ENCODE measurements at regions of chr2 and their contacts with region 1.

Region 1: DNA sequence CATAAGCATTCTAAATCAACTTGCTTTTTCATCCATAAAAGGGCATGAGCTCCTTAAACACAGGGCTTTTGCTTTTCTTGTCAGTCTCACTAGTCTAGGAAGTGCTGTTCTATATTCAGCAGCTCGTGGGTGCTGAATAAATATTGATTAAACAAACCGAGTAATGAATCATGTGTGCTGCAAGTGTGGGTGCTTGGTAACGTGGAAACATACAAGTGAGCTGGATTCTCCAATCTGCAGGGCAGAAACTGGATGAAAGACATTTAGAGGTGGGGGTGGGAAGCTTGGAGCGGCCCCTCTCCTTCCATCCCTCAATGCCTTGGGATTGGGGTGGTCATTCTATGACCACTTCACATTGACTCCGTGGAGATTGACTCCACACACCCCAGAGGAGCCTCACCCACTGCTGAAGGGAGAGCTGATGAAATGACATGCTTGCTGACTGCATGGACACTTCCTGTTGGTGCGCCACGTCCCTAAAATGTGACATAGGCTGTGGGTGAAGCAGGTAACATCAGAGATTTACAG is 114.6 kb downstream of the DOCK10 start:
- DNase-seq: peak; percentile 65
- ATAC-seq: peak; percentile 75
- H3K4me3 Mint-ChIP-seq: peak overlapping the region; percentile 68
- H3K27ac Mint-ChIP-seq: peak overlapping the region; percentile 91
- H3K4me1 Mint-ChIP-seq: peaks cover 91% of the 10 kb centered on the region
- H3K27me3 Mint-ChIP-seq: no peaks in the 10 kb centered on the region

Region 2: GRCh38 chr2:224875841-224876240 is 51.9 kb before region 1 on chr2:
- POLR2A ChIA-PET with region 1: no interaction called
- DNase-seq: no peak
- ATAC-seq: no peak
- H3K4me3 Mint-ChIP-seq: no peak overlapping the region
- H3K27ac Mint-ChIP-seq: no peak overlapping the region
- H3K4me1 Mint-ChIP-seq: peaks cover 14% of the 10 kb centered on the region
- H3K27me3 Mint-ChIP-seq: no peaks in the 10 kb centered on the region

Region 3: DNA sequence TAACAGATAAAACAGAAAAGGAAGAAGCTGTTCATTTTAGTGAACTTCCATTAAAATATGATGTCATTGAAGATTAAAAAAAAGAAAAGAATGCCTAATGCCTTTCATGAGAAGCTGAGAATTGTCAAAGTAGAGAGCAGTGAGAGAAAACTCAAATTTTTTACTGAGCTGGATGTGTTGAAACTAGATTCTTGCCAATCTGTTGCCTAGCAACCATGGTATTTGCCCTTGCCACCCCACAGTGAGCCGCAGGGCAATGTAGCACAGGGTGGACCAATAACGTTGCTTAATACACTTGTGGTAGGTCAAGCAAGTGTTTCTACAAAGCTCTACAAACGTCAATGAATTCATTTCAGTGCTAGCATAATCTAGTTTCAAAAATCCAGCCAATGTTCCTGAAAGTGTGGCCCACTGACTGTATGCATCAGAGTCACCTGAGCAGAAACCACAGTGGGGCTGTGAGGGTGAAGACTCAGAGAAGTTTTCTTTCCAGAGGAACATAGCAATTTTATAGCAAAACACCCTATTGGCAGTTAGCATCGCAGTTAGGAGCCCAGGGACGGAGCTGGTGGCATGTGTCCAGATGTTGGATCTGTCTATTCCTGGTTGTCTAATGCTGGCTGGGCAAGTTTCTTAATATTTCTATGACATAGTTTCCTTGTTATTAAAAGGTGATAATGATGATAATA is 17.7 kb before region 1 on chr2:
- POLR2A ChIA-PET with region 1: no interaction called
- DNase-seq: no peak
- ATAC-seq: peak; percentile 58
- H3K4me3 Mint-ChIP-seq: peak overlapping the region; percentile 29
- H3K27ac Mint-ChIP-seq: peak overlapping the region; percentile 61
- H3K4me1 Mint-ChIP-seq: peaks cover 42% of the 10 kb centered on the region
- H3K27me3 Mint-ChIP-seq: no peaks in the 10 kb centered on the region

Region 4: DNA sequence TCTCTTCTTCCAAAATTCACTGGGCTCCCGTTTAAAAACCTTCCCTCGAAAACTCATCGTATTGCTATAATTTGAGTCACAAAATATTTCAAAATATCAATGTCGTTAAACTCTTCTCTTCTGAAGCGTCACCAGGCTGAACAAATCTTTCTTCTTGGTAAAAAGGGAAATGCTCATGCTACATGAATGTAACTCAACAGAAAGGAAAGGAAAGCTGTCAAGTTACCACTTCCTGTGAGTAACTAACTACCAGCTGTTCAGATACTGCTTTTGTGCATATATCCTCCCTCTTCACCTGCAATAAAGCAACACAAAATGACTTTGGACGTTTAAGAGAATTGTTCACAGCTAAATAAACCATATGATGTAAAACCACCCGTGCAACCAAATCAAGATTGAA is 19.2 kb after region 1 on chr2:
- POLR2A ChIA-PET with region 1: interaction called, 172 read pairs
- DNase-seq: no peak
- ATAC-seq: peak; percentile 62
- H3K4me3 Mint-ChIP-seq: peak overlapping the region; percentile 96
- H3K27ac Mint-ChIP-seq: peak overlapping the region; percentile 98
- H3K4me1 Mint-ChIP-seq: peaks cover 49% of the 10 kb centered on the region
- H3K27me3 Mint-ChIP-seq: no peaks in the 10 kb centered on the region

Region 5: DNA sequence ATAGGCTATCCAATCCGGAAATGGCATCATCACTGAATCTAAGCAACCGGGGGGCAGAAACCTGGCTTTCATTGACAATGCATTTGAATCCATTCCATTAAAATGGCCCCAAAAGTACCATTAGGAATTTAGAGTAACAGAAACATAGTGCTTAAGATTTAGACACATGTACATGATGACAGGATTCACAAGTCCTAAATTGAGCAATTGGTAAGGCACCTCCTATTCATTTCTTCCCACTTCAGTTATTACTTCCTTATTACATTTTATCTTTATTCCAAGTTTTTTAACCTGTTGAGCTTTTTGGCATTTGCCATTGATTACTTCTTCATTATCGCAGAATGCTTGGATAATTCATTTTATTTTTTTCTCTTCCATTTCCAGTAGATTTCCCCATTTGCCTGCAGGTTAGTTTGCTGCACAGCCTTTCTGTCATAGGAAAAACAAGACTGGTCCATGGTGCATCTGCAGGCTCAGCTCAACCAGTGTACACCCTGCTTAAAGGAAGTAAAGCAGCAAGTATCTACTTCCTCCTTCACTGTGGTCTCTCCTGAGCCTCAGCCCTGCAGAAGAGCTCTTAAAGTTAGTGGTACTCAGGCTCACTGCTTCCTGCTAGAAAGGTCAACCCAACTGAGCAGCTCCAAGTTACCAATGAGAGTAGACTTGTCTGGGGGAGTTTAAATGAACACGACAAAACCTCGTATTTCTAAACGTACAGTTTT is 25.4 kb after region 1 on chr2:
- POLR2A ChIA-PET with region 1: interaction called, 172 read pairs
- DNase-seq: no peak
- ATAC-seq: peak; percentile 95
- H3K4me3 Mint-ChIP-seq: peak overlapping the region; percentile 74
- H3K27ac Mint-ChIP-seq: peak overlapping the region; percentile 91
- H3K4me1 Mint-ChIP-seq: peaks cover 76% of the 10 kb centered on the region
- H3K27me3 Mint-ChIP-seq: no peaks in the 10 kb centered on the region

Region 6: DNA sequence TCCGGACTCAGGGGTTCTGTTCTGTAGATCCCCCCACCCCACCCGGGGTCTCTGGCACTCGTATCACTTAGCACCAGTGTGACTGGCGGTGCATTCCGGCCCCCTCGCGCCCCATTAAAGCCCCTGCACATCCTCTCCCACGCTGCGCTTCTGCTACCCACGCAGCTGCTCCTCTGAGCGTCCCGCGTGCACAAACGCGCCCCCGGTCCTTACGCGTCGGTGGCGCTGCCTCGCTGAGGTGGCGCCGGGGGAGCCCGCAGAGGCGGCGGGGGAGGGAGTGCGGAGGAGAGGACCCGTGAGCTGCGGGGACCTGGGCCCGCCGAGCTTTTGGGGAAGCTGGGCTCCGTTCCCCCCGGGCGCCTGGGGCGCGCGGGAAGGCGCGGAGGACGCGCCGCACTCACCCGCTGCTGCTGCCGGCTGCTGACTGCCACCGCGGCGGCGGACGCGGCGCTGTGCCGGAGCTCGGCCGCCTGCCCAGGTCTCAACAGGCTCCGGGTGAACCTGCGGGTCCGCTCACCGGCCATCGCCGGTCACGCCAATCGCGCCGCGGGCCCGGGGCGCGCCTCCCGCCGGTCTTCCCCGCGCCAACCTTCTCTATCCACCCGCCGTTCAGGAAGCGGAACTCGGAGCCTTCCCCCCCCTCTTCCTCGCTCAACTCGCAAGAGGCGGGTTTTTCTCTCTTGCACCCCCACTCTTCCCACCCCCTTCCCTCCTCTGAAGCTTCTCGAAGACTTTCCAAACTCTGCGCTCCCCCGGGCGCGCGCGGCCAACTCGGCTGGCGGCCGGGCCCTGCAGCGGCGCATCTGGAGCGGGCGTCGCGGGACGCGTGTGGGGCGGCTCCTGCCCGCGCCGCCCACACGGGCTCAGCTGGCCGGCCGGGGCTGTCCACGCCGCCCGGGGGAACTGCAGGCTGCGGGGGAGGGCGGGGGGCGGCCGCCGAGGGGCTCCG is 114.4 kb after region 1 on chr2 and contains the start of gene DOCK10:
- POLR2A ChIA-PET with region 1: interaction called, 23 read pairs
- DNase-seq: peak; percentile 75
- ATAC-seq: peak; percentile 48
- H3K4me3 Mint-ChIP-seq: peak within 1 kb of the TSS; percentile 95
- H3K27ac Mint-ChIP-seq: peak within 1 kb of the TSS; percentile 96
- H3K4me1 Mint-ChIP-seq: peaks cover 35% of the 10 kb centered on the region
- H3K27me3 Mint-ChIP-seq: peaks cover 20% of the 10 kb centered on the region
- total RNA-seq, gene DOCK10: 259 to 273 TPM

Region 7: GRCh38 chr2:225052703-225053102 is 125.0 kb after region 1 on chr2:
- POLR2A ChIA-PET with region 1: interaction called, 11 read pairs
- DNase-seq: no peak
- ATAC-seq: peak; percentile 92
- H3K4me3 Mint-ChIP-seq: peak overlapping the region; percentile 62
- H3K27ac Mint-ChIP-seq: peak overlapping the region; percentile 89
- H3K4me1 Mint-ChIP-seq: peaks cover 54% of the 10 kb centered on the region
- H3K27me3 Mint-ChIP-seq: no peaks in the 10 kb centered on the region